HepG2 (cell line): ENCODE measurements at regions of chr15 and their contacts with region 1.

Region 1: DNA sequence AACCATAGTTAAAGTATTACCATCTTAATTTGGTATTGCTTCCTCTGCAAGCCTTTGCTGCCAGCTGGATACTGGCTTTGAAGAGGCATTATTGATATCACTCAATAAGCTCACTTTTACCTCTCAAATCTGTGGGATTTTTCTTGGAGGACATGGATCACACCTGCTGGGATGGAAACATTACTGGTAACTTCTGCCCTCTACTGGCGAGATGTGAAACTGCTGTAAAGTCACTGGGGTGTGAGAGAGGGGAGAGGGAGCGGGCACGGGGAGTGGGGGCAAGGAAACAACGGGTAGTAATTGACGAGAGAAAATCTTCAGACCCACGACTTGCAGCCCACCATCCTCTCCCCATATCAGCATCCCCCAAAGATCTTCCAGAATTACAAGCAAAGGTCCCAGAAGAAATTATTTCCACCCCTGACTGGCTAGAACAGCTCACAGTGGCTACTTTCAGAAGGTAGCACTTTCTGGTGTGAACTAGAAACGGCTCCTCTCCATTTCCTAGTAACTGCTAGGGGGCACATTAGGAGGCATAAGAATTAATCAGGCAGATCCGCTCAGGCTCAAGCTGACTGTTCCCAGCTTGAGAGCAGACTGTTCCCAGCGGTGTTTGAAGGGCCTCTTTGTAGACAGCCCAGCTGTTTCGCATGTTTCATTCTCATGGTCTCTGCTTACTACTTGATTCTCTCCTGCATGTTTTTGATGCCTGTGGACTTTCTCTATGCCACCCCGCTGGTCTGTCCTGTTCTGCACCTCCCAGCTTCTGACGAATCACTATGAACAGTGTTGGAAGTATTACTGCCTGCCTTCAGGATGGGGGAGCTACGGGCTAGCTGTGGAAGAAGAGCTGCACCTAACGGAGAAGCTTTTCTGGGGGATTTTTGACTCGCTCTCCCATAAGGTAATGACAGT is 230.4 kb upstream of the CHRM5 start:
- DNase-seq: peak; percentile 25
- ATAC-seq: peak; percentile 90
- H3K4me3 ChIP-seq: no peak overlapping the region
- H3K27ac ChIP-seq: no peak overlapping the region
- H3K4me1 ChIP-seq: no peaks in the 10 kb centered on the region
- H3K27me3 ChIP-seq: peaks cover 0 to 7% of the 10 kb centered on the region in 2 experiments; a peak in 2 of 5 replicates
- CTCF ChIP-seq: peak; percentile 71
- EP300 ChIP-seq: no peak
- POLR2A ChIP-seq: no peak
- RAD21 ChIP-seq: no peak

Region 2: DNA sequence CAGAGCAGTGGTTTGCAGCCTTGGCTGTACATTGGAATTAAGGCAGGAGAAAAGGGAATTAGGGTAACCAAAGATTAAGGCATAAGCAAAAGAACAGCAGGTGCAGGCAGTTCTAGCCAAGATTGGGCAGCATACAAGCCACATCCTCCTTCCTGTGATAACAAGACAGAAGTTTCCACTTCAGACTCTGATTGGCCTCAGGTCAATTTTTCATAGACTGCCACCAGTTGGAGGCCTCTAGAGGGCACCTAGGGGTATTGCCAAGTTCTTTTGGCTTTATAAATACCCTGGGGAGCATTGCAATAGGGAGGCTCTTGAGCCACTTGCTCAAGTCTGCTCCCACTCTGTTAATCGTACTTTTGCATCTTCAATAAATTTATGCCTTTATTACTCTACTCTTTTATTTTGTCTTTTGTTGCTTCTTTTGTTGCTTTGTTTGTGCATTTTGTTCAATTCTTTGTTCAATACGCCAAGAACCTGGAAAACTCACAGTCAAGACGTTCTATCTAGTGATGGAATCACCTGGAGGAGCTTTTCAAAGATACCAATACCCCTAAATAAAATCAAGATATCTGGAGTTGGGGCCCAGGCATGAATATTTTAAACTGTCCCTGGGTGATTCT is 511.3 kb before region 1 on chr15:
- CTCF ChIA-PET with region 1: no interaction called
- POLR2A ChIA-PET with region 1: no interaction called
- in situ Hi-C with region 1: no loop called
- intact Hi-C with region 1: loop called (anchors 5 kb)
- DNase-seq: no peak
- ATAC-seq: peak; percentile 75
- H3K4me3 ChIP-seq: no peak overlapping the region
- H3K27ac ChIP-seq: no peak overlapping the region
- H3K4me1 ChIP-seq: no peaks in the 10 kb centered on the region
- H3K27me3 ChIP-seq: no peaks in the 10 kb centered on the region
- CTCF ChIP-seq: no peak
- EP300 ChIP-seq: no peak
- POLR2A ChIP-seq: no peak
- RAD21 ChIP-seq: no peak

Region 3: DNA sequence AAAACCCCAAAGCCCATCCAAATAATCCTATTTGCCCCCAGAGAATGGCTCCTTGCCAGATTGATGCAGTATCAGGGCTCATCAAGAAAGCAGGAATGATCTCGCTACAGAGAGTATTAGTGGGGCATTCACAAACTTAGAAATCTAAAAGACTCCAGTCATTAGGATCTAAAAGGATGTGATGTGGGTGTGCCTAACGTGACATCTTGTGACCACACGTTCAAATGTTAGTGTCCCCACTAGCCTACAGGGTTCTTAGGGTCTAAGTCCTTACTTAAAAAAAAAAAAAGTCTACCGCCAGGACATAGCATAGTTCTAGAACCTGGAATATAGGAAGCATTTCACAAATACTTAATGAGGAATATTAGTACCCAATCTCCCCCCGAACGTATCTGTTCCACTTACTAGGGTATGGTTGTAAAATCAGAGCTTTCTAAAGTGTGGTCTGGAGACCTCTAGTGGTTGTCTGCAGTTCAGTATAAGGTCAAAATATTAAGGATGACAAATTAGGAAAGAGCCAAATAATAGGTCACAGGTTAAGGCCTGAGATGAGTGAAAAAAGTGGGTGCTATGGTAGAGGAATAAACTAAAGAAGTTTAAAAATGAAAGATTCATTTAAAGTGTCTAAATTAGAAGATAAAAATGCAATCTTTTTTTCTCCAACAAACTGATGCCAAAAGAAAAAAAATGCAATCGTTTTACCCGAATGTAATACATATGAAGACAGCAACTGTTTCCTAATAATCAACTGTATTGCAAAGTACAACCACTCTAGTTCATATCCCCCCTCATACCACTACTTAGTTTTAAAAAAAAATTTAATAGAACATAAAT is 226.1 kb after region 1 on chr15:
- CTCF ChIA-PET with region 1: interaction called, 9 read pairs
- POLR2A ChIA-PET with region 1: no interaction called
- in situ Hi-C with region 1: no loop called
- intact Hi-C with region 1: loop called (anchors 1 kb)
- DNase-seq: peak; percentile 5
- ATAC-seq: peak; percentile 57
- H3K4me3 ChIP-seq: no peak overlapping the region
- H3K27ac ChIP-seq: no peak overlapping the region
- H3K4me1 ChIP-seq: no peaks in the 10 kb centered on the region
- H3K27me3 ChIP-seq: no peaks in the 10 kb centered on the region
- CTCF ChIP-seq: peak; percentile 69
- EP300 ChIP-seq: no peak
- POLR2A ChIP-seq: no peak
- RAD21 ChIP-seq: 0 out of 2 replicates have a peak, but pooled peaks have one; percentile 23

Region 4: GRCh38 chr15:33994005-33994615 is 256.2 kb after region 1 on chr15:
- CTCF ChIA-PET with region 1: interaction called, 7 read pairs
- POLR2A ChIA-PET with region 1: no interaction called
- in situ Hi-C with region 1: loop called (anchors 10 kb)
- intact Hi-C with region 1: loop called (anchors 1 kb)
- DNase-seq: peak; percentile 45
- ATAC-seq: peak; percentile 88
- H3K4me3 ChIP-seq: no peak overlapping the region
- H3K27ac ChIP-seq: no peak overlapping the region
- H3K4me1 ChIP-seq: no peaks in the 10 kb centered on the region
- H3K27me3 ChIP-seq: no peaks in the 10 kb centered on the region
- CTCF ChIP-seq: peak; percentile 82
- EP300 ChIP-seq: no peak
- POLR2A ChIP-seq: no peak
- RAD21 ChIP-seq: peak; percentile 67